A673 (cell line): ENCODE measurements at regions of chr10 and their contacts with region 1.

Region 1: DNA sequence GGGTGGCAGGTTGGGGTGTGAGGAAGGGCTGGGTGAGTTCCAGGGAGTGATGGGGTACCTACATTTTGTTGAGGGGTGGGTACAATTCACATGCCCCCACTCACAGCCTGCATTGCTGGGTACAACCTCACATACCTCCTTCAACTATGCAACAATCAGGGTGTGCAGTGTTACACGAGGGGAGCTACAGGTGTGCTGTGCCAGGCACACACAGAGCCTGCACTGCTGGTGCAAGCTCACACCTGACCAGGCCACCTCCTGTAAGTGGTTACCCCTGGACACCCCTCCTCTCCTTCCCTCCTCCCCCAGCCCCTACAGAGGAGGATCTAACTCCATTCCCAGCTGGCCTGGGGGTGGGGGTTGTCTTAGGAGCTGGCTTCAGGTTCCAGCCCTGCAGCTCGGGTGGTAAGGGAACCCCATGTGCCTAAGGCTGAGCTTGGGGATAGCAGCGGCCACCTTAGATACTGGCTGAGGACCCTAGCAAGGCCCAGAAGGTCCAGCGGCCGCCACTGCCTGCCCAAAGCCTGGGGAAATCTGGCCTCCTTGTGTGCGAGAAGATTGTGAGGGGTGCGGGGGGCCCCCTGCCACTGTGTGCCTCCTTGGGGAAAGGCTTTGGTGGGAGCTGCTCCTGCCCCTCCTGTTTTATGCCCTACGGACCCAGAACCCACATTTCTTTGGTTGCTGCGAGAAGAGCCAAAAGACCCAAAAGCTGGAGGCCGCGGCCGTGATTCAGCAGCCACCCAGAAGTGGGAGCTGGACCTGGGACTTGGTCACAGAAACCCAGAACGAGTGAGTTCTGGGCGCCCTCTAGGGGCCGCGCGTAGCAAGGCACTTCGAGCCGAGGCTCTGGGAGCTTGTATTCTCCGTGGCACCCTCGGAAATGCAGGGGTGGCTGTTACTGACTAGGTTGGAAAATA is 10.8 kb downstream of the TLX1 start:
- DNase-seq: peak; percentile 87
- H3K4me3 ChIP-seq: no peak overlapping the region
- H3K27ac ChIP-seq: no peak overlapping the region
- H3K4me1 ChIP-seq: no peaks in the 10 kb centered on the region
- H3K27me3 ChIP-seq: peaks cover 49% of the 10 kb centered on the region
- CTCF ChIP-seq: peak; percentile 97

Region 2: DNA sequence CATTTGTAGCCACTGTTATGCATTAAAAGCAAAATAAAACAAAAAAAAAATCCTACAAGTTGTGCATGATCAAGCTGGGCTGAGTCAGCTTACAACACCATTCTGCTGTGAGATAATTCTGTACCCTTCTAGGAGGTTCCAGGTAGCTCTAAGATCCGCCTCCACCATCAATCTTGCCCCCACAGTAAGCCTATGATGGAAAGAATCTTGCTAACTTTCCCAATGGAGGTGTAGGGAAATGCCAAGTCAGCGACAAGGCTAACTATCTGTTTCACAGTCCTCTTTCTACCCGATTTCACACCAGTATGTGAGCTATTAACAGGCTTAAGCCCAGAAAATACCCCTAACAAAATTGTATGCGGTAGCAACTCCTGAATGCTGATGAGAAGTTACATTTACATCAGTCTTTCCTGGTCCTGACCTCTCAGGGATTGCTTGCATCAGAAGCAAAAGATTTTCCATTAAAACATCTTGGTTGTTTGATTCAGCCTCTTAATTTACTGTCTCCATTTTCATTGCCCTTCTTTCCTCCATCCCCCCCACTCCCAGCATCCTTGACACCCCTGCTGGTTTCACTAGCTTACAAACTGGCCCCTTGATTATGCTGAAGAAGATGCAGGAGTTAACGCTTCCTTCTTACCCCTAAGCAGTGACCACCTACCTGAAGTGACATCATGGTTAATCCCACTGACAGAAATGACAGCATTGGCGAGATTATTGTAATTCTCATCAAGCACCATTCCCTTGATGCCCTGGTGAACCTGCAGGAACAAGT is 1088.0 kb before region 1 on chr10:
- CTCF ChIA-PET with region 1: no interaction called
- POLR2A ChIA-PET with region 1: no interaction called
- intact Hi-C with region 1: no loop called
- DNase-seq: no peak
- H3K4me3 ChIP-seq: no peak overlapping the region
- H3K27ac ChIP-seq: no peak overlapping the region
- H3K4me1 ChIP-seq: no peaks in the 10 kb centered on the region
- H3K27me3 ChIP-seq: no peaks in the 10 kb centered on the region
- CTCF ChIP-seq: no peak

Region 3: GRCh38 chr10:100827819-100828737 is 313.8 kb before region 1 on chr10:
- CTCF ChIA-PET with region 1: no interaction called
- POLR2A ChIA-PET with region 1: no interaction called
- intact Hi-C with region 1: no loop called
- DNase-seq: peak; percentile 24
- H3K4me3 ChIP-seq: peak overlapping the region; percentile 31
- H3K27ac ChIP-seq: no peak overlapping the region
- H3K4me1 ChIP-seq: peaks cover 17% of the 10 kb centered on the region
- H3K27me3 ChIP-seq: peaks cover 99% of the 10 kb centered on the region
- CTCF ChIP-seq: no peak

Region 4: GRCh38 chr10:101042667-101043355 is 99.1 kb before region 1 on chr10:
- CTCF ChIA-PET with region 1: interaction called, 20 read pairs
- POLR2A ChIA-PET with region 1: no interaction called
- intact Hi-C with region 1: loop called (anchors 5 kb)
- DNase-seq: peak; percentile 93
- H3K4me3 ChIP-seq: peak overlapping the region; percentile 54
- H3K27ac ChIP-seq: peak overlapping the region; percentile 84
- H3K4me1 ChIP-seq: peaks cover 37% of the 10 kb centered on the region
- H3K27me3 ChIP-seq: no peaks in the 10 kb centered on the region
- CTCF ChIP-seq: no peak

Region 5: DNA sequence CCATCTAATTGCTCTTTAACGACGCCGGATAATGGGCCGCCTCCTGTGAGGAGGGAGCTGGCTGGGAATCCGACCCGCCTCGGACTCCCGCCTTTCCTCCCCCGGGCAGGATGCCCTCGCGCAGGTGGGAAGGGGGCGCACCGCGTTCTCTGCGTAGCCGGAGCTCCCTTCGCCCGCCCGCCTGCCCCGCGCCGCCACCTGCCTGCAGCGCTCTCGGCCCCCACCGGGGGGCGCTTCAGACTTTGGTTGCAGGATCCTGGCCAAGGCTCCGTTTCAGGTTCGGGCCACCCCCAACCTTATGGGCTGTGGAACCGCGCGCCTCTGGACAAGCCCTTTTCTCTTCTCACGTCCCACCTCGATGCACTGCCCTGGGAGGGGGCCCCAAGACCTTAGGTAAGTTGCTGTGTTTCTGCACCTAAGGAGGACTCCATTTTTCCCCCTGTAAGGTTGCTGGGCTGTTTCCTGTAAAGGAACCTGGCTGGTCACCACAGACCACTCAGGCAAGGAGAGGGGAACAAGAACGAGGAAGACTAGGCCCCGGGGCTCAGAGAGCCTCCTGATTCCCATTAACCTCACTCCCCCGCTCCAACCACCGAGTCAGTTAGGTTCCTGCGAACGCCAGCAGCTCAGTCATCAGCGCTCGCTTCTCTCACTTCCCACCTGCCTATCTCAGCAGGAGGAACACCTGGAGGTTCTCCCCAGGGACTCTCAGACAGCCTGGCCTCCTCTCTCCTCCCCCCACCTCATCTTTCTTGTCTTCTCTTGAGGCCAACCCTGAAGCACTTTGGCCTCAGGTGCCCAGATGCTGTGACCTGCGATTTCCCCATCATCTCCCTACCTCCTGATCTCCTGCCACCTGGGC is 91.4 kb before region 1 on chr10:
- CTCF ChIA-PET with region 1: interaction called, 15 read pairs
- POLR2A ChIA-PET with region 1: no interaction called
- intact Hi-C with region 1: no loop called
- DNase-seq: peak; percentile 75
- H3K4me3 ChIP-seq: peak overlapping the region; percentile 29
- H3K27ac ChIP-seq: no peak overlapping the region
- H3K4me1 ChIP-seq: peaks cover 24% of the 10 kb centered on the region
- H3K27me3 ChIP-seq: no peaks in the 10 kb centered on the region
- CTCF ChIP-seq: peak; percentile 95

Region 6: GRCh38 chr10:101095542-101096213 is 46.2 kb before region 1 on chr10:
- CTCF ChIA-PET with region 1: interaction called, 106 read pairs
- POLR2A ChIA-PET with region 1: no interaction called
- intact Hi-C with region 1: loop called (anchors 1 kb)
- DNase-seq: peak; percentile 82
- H3K4me3 ChIP-seq: no peak overlapping the region
- H3K27ac ChIP-seq: no peak overlapping the region
- H3K4me1 ChIP-seq: no peaks in the 10 kb centered on the region
- H3K27me3 ChIP-seq: peaks cover 13% of the 10 kb centered on the region
- CTCF ChIP-seq: peak; percentile 88

Region 7: GRCh38 chr10:101123085-101123814 is 18.6 kb before region 1 on chr10:
- CTCF ChIA-PET with region 1: interaction called, 10 read pairs
- POLR2A ChIA-PET with region 1: no interaction called
- intact Hi-C with region 1: no loop called
- DNase-seq: no peak
- H3K4me3 ChIP-seq: peak overlapping the region; percentile 5
- H3K27ac ChIP-seq: no peak overlapping the region
- H3K4me1 ChIP-seq: no peaks in the 10 kb centered on the region
- H3K27me3 ChIP-seq: peaks cover 79% of the 10 kb centered on the region
- CTCF ChIP-seq: no peak

Region 8: GRCh38 chr10:101558202-101558601 is 416.3 kb after region 1 on chr10:
- CTCF ChIA-PET with region 1: no interaction called
- POLR2A ChIA-PET with region 1: no interaction called
- intact Hi-C with region 1: no loop called
- DNase-seq: no peak
- H3K4me3 ChIP-seq: no peak overlapping the region
- H3K27ac ChIP-seq: no peak overlapping the region
- H3K4me1 ChIP-seq: no peaks in the 10 kb centered on the region
- H3K27me3 ChIP-seq: no peaks in the 10 kb centered on the region
- CTCF ChIP-seq: no peak

Region 9: DNA sequence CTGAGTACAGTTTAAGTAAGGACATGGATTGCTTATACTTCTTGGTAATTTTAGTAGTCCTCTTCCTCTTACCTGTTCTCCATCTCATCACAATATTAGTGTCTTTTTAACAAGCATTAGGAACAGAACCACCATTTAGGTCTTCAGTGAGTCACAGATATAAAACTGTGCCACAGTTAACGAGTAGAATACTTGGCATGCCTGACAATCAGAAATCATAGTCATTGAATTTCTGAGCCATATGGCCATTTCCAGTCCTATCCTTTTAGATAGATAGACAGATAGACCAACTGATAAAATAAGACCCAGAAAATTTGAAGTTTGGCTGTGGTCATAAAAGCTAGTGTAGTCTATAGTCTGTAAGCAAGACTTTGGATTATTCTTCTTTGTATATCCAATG is 1174.5 kb after region 1 on chr10:
- CTCF ChIA-PET with region 1: no interaction called
- POLR2A ChIA-PET with region 1: interaction called, 14 read pairs
- intact Hi-C with region 1: no loop called
- DNase-seq: no peak
- H3K4me3 ChIP-seq: no peak overlapping the region
- H3K27ac ChIP-seq: no peak overlapping the region
- H3K4me1 ChIP-seq: peaks cover 7% of the 10 kb centered on the region
- H3K27me3 ChIP-seq: no peaks in the 10 kb centered on the region
- CTCF ChIP-seq: no peak